Activated CD4-positive, alpha-beta T cell treated with anti-CD3 and anti-CD28 coated beads for 36 hours (primary cell): ENCODE measurements at regions of chr2 and their contacts with region 1.

Region 1: DNA sequence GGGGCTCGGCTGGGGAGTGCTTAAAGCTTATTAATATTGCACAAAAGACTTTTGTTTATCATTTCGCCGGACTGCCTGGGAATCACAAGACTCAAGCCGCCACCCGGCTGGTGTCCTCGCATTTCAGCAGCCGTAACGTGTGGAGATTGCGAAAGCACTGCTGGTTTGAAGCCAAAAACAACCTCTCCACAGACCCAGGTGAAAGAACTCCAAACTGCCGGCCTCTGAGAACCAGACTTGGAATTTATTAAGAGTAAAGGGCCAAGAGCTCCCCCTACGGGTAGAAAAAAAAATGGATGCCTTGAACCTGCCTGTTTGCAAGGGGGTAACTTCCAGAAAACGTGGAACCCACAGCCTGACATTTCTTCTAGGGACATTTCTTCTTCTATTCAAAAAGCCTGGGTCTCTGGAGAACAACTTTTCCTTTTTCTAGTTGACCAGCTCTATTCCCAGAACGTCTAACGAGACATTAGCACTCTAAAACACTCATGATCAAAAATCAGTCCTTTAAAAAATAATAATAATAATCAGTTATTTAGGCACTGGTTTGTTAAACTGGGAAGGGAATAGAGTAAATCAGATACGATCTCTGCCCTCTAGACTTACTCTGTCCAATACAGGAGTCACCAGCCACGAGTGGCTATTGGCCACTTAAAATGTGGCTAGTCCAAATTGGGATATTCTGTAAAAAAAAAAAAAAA is 216.3 kb downstream of the C1D start:
- DNase-seq: peak; percentile 50
- ATAC-seq: no peak
- H3K4me3 Mint-ChIP-seq: no peak overlapping the region
- H3K27ac Mint-ChIP-seq: no peak overlapping the region
- H3K4me1 Mint-ChIP-seq: no peaks in the 10 kb centered on the region
- H3K27me3 Mint-ChIP-seq: peaks cover 19% of the 10 kb centered on the region

Region 2: GRCh38 chr2:68031542-68032160 is 185.1 kb after region 1 on chr2:
- CTCF ChIA-PET with region 1: interaction called, 4 read pairs
- POLR2A ChIA-PET with region 1: no interaction called
- intact Hi-C with region 1: loop called in 1 of 2 experiments (anchors 2 kb)
- DNase-seq: no peak
- ATAC-seq: no peak
- H3K4me3 Mint-ChIP-seq: no peak overlapping the region
- H3K27ac Mint-ChIP-seq: no peak overlapping the region
- H3K4me1 Mint-ChIP-seq: no peaks in the 10 kb centered on the region
- H3K27me3 Mint-ChIP-seq: no peaks in the 10 kb centered on the region